Activated CD8-positive, alpha-beta T cell treated with anti-CD3 and anti-CD28 coated beads, Interleukin-2, amount 10 ng/mL, durations not matched to agents 7 days and 5 days (primary cell): ENCODE measurements at regions of chr11 and their contacts with region 1.

Region 1: GRCh38 chr11:61254403-61255025 is 13.5 kb downstream of the PGA5 start:
- DNase-seq: peak; percentile 78
- ATAC-seq: peak; percentile 96
- H3K4me3 Mint-ChIP-seq: no peak overlapping the region
- H3K27ac Mint-ChIP-seq: no peak overlapping the region
- H3K4me1 Mint-ChIP-seq: no peaks in the 10 kb centered on the region
- H3K27me3 Mint-ChIP-seq: no peaks in the 10 kb centered on the region

Region 2: GRCh38 chr11:61266602-61267001 is 12.1 kb after region 1 on chr11:
- CTCF ChIA-PET with region 1: interaction called, 10 read pairs
- POLR2A ChIA-PET with region 1: no interaction called
- DNase-seq: no peak
- ATAC-seq: no peak
- H3K4me3 Mint-ChIP-seq: no peak overlapping the region
- H3K27ac Mint-ChIP-seq: no peak overlapping the region
- H3K4me1 Mint-ChIP-seq: no peaks in the 10 kb centered on the region
- H3K27me3 Mint-ChIP-seq: no peaks in the 10 kb centered on the region

Region 3: DNA sequence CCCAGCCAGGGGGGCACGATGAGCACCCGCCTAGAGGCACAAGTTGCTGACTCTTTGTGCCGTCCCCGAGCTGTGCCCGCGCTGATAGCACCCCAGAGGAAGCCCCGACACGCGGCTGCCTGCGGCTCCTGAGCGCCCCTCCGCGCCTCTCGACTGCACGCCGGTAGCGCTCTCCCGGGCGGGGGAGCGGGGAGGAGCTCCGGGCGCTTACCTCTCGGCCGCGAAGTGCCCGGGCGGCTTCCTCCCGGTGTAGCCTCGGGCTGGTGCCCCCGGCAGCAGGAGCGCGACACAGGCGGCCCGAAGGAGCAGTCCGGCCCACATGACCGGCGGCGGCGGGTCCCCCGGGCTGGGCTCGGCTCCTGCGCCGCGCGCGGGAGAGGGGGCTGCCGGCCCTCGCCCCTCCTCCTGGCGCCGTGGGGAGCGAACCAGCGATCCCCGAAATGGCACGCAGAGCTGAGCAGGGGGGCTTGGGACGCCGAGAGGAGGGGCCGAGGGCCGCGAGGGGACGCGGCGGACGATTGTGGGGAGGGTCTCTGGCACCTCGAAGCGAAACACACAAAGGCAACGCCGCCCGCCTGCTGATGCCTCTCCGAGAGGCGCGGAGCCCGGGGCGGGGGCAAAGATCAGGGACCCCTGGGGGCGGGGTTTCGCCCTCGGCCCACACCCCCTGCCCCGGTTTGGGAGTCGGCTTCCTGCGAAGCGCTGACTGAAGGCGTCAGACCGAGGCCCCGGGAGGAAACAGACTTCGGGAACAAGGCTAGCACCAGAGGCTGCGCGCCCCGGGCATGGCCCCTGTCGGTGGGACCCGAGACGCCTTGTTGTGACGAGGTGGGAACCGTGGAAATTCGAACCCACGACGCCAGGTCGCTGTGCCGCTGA is 40.4 kb after region 1 on chr11 and contains the start of gene VWCE:
- CTCF ChIA-PET with region 1: interaction called, 32 read pairs
- POLR2A ChIA-PET with region 1: interaction called, 4 read pairs
- DNase-seq: peak; percentile 84
- ATAC-seq: peak; percentile 87
- H3K4me3 Mint-ChIP-seq: peak within 1 kb of the TSS; percentile 79
- H3K27ac Mint-ChIP-seq: peak within 1 kb of the TSS; percentile 79
- H3K4me1 Mint-ChIP-seq: peaks cover 48% of the 10 kb centered on the region
- H3K27me3 Mint-ChIP-seq: no peaks in the 10 kb centered on the region
- total RNA-seq, gene VWCE: 2.2 to 3.3 TPM